B cell (primary cell): ENCODE measurements at regions of chrX and their contacts with region 1.

Region 1: DNA sequence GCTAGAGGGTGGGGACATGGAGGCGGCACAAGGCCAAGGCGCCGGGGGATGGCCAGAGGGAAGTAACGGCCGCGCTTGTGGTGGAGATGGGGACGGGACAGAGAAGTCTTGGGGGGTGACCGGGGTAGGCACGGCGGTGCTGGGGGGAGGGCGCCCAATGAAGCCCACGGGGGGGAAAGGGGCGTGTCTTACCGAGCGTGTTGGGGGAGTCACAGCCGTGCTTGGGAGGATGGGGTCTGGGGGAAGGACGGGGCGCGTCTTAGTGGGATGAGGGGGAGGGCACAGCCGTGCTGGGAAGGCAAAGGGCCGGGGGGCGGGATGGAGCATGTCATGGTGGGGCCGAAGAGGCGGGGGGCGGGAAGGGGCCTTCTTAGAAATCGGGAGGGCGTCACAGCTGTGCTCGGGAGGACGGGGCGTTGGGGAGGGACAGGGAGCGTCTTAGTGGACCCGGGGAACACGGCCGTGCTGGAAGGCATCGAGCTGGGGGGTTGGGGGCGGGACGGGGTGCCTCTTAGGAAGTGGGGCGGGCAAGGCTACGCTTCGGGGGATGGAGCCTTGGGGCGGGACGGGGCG is 862 bp downstream of the ARSD start:
- DNase-seq: peak; percentile 27
- ATAC-seq: peak; percentile 2
- H3K4me3 ChIP-seq: peak overlapping the region in 4 of 5 experiments; percentile 66 to 76 (median 71)
- H3K4me3 Mint-ChIP-seq: peak overlapping the region; percentile 91
- H3K27ac ChIP-seq: peak overlapping the region in 1 of 2 donors; percentile 31
- H3K27ac Mint-ChIP-seq: peak overlapping the region; percentile 80
- H3K4me1 ChIP-seq: no peaks in the 10 kb centered on the region
- H3K4me1 Mint-ChIP-seq: peaks cover 4% of the 10 kb centered on the region
- H3K27me3 ChIP-seq: no peaks in the 10 kb centered on the region
- H3K27me3 Mint-ChIP-seq: no peaks in the 10 kb centered on the region
- CTCF ChIP-seq: no peak

Region 2: GRCh38 chrX:2690856-2691542 is 237.3 kb before region 1 on chrX and contains the start of gene CD99:
- CTCF ChIA-PET with region 1: no interaction called
- POLR2A ChIA-PET with region 1: no interaction called
- intact Hi-C with region 1: loop called (anchors 5 kb)
- DNase-seq: peak; percentile 94
- ATAC-seq: peak; percentile 92
- H3K4me3 ChIP-seq: peak within 1 kb of the TSS; percentile 67 to 99 (median 84)
- H3K4me3 Mint-ChIP-seq: peak within 1 kb of the TSS; percentile 87
- H3K27ac ChIP-seq: peak within 1 kb of the TSS; percentile 26 to 50
- H3K27ac Mint-ChIP-seq: peak within 1 kb of the TSS; percentile 82
- H3K4me1 ChIP-seq: peaks cover 27 to 46% of the 10 kb centered on the region in 2 donors
- H3K4me1 Mint-ChIP-seq: peaks cover 39% of the 10 kb centered on the region
- H3K27me3 ChIP-seq: no peaks in the 10 kb centered on the region
- H3K27me3 Mint-ChIP-seq: no peaks in the 10 kb centered on the region
- CTCF ChIP-seq: no peak
- total RNA-seq, gene CD99: 133 TPM in 2 replicates